ENCODE measurements at regions of chr1 and their contacts with region 1.

Region 1: DNA sequence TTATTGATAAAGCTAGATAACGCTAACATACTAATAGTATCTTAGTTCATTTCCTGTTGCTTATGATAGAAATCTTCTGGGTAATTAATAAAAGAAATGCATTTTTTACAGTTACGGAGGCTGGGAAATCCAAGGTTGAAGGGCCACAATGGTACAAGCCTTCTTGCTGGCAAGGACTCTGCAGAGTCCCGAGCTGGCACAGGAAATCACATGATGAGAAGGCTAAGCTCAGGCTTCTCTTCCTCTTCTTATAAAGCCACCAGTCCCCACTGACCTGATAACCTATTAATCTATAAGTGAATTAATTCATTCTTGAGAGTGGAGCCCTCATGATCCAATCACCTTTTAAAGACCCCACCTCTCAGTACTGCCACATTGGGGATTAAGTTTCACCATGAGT is 82.6 kb downstream of the GPR161 start:
- DNase-seq: no peak
- H3K4me3 ChIP-seq: no peak overlapping the region
- H3K4me3 Mint-ChIP-seq: peak overlapping the region in 1 of 7 donors; percentile 29
- H3K27ac ChIP-seq: no peak overlapping the region
- H3K27ac Mint-ChIP-seq: peak overlapping the region in 2 of 8 donors; percentile 5 to 43
- H3K4me1 ChIP-seq: no peaks in the 10 kb centered on the region
- H3K4me1 Mint-ChIP-seq: peaks cover 11 to 19% (median 17%) of the 10 kb centered on the region in 3 donors
- H3K27me3 ChIP-seq: no peaks in the 10 kb centered on the region
- H3K27me3 Mint-ChIP-seq: no peaks in the 10 kb centered on the region

Region 2: GRCh38 chr1:168065506-168065905 is 11.4 kb after region 1 on chr1:
- CTCF ChIA-PET with region 1: no interaction called
- POLR2A ChIA-PET with region 1: interaction called, 15 read pairs
- DNase-seq: no peak
- H3K4me3 ChIP-seq: no peak overlapping the region
- H3K4me3 Mint-ChIP-seq: no peak overlapping the region
- H3K27ac ChIP-seq: no peak overlapping the region
- H3K27ac Mint-ChIP-seq: peak overlapping the region in 1 of 8 donors; percentile 47
- H3K4me1 ChIP-seq: no peaks in the 10 kb centered on the region
- H3K4me1 Mint-ChIP-seq: peaks cover 0 to 3% (median 0%) of the 10 kb centered on the region in 3 donors
- H3K27me3 ChIP-seq: no peaks in the 10 kb centered on the region
- H3K27me3 Mint-ChIP-seq: no peaks in the 10 kb centered on the region

Measured in CD8-positive, alpha-beta memory T cell (primary cell).